Head of caudate nucleus (tissue), 42 donors: ENCODE measurements at regions of chr7 and their contacts with region 1.

Region 1: DNA sequence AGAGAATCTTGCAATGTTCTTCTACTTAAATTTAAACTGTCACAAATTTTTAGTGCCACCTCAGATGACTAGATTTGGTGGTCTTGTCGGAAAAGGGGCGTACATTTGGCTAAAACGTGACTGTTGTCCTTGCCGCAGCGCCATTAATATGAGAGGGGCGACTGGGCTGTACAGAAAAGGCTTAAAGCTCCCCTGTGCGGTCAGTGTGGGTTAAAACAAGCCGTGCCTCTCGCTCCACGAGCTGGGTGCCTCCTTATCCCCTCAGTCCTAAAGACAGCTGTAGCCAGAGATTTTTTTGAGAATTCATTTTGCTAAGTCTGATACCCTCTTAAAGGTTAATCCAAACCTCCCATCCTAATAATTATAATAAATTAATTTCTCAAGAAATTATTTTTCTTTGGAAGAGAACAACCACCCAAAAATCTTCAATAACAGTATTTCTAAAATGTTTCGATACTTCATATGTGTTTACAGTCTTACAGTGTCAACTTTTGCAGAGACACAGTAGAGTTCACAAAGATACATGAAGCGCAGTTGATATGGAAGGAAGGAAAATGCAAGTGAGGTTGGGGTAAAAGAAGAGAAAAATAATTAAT is 68.6 kb downstream of the C7orf25 start:
- DNase-seq: peak in 38 of 42 donors; percentile 8 to 79 (median 52)

Region 2: GRCh38 chr7:41940760-41941343 is 902.5 kb before region 1 on chr7:
- intact Hi-C with region 1: loop called (anchors 10 kb)
- DNase-seq: peak; percentile 40 to 89 (median 78)